ENCODE measurements at regions of chr6 and their contacts with region 1.

Region 1: GRCh38 chr6:154156135-154156896 is 117.3 kb downstream of the OPRM1 start:
- DNase-seq: peak in 2 of 3 donors; percentile 45 to 57
- ATAC-seq: peak; percentile 62 to 71
- H3K4me3 ChIP-seq: no peak overlapping the region
- H3K27ac ChIP-seq: no peak overlapping the region
- H3K4me1 ChIP-seq: no peaks in the 10 kb centered on the region
- H3K27me3 ChIP-seq: no peaks in the 10 kb centered on the region

Region 2: GRCh38 chr6:154276810-154277628 is 120.7 kb after region 1 on chr6:
- intact Hi-C with region 1: loop called (anchors 5 to 10 kb)
- DNase-seq: no peak
- ATAC-seq: no peak
- H3K4me3 ChIP-seq: no peak overlapping the region
- H3K27ac ChIP-seq: no peak overlapping the region
- H3K4me1 ChIP-seq: no peaks in the 10 kb centered on the region
- H3K27me3 ChIP-seq: no peaks in the 10 kb centered on the region

Region 3: GRCh38 chr6:154370545-154370944 is 214.2 kb after region 1 on chr6:
- intact Hi-C with region 1: loop called in 3 of 4 experiments (anchors 5 to 10 kb)
- DNase-seq: peak in 1 of 3 donors; percentile 31
- ATAC-seq: peak; percentile 32 to 74
- H3K4me3 ChIP-seq: no peak overlapping the region
- H3K27ac ChIP-seq: no peak overlapping the region
- H3K4me1 ChIP-seq: no peaks in the 10 kb centered on the region
- H3K27me3 ChIP-seq: no peaks in the 10 kb centered on the region

Region 4: DNA sequence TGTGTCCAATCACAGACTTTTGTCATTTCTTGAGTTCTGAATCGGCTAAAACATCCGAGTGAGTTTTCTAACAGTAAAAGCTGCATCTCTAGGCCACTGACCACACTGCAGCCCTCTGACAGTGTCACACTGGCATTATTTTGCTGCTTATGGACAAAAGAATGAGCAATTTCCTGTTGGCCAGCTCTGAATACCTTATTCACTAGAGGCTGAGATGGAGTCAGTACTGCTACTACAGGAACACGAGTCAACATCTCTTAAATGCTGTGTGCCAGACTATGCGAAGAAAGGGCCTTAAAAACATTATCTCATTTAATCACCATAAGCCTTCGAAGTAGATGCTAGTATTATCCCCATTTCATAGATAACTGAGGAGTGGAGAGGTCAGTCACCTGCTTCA is 242.8 kb after region 1 on chr6:
- intact Hi-C with region 1: loop called in 2 of 4 experiments (anchors 10 kb)
- DNase-seq: no peak
- ATAC-seq: peak in 1 of 2 donors; percentile 29
- H3K4me3 ChIP-seq: no peak overlapping the region
- H3K27ac ChIP-seq: no peak overlapping the region
- H3K4me1 ChIP-seq: no peaks in the 10 kb centered on the region
- H3K27me3 ChIP-seq: no peaks in the 10 kb centered on the region

Region 5: DNA sequence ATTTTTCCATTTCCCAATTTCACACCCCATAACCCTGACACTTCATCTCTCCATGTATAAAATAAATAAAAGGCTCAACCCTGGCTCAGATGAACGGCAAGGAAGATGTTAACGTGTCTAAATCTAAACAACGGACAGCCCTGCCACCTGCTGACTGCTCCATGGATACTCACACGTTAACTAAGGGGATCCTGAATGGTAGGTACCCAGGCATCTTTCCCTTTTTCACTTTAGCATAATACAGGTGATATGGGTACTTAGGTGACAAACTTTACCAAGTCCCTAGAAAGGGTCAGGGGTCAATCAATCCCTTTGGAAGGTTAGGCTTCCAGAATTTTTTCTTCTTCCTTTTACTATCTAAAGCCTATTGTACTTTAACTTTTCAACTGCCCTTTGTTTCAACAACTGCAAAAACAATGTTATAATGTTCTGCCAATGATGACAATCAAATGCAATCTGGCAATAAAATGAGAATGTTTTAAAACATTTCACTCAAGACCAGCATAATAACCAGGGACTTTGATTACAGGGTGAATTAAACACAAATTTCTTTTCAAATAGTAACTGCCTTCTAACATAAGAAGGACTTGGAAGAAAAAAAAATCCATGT is 252.7 kb after region 1 on chr6:
- intact Hi-C with region 1: loop called in 1 of 4 experiments (anchors 10 kb)
- DNase-seq: no peak
- ATAC-seq: peak in 1 of 2 donors; percentile 28
- H3K4me3 ChIP-seq: no peak overlapping the region
- H3K27ac ChIP-seq: no peak overlapping the region
- H3K4me1 ChIP-seq: no peaks in the 10 kb centered on the region
- H3K27me3 ChIP-seq: no peaks in the 10 kb centered on the region